Natural killer cell (primary cell): ENCODE measurements at regions of chr10 and their contacts with region 1.

Region 1: DNA sequence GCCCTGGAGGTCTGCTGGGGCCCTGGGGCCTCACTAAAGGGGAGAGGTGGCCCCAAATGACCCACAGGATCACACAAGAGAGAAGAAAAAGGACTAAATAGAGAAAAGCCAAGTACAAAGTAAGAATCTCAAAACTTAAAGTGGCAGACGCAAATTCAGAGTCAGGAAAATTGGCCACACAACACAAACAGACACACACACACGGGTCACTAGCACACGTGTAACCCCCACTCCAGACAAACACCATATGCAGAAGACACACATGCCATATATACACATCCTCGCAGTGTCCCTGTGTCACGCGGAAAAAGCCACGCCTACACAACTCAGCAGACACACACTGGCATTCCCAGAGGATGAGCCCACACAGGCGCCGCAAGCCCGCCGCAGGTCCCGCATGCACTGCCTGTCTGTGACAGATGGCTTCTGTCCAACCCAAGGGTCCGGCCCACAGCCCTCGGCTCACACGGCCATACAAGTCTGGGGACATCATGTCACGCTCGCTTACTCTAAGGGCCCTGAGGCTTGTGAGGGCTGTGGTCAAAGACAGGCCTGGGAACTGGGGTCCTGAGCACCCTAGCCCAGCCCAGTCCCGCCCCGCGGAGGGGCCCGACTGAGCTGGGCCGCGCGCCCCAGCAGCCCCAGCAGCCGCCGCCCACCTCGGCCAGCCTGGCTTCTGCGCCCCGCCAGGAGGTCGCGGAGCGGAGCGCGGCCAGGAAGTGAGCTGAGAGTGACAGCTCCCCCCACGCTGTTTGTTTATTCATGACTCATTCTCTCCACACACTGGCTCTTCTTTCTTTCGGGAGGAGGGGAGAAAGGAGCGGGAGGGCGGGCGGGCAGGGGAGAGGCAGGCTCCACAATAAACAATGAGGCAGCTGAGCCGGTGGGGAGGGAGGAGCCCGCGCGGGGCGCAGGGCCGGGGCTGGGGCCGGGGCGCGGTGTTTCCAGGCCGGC is 95.5 kb upstream of the ZMIZ1 start:
- DNase-seq: peak; percentile 73 to 83
- ATAC-seq: peak; percentile 69 to 82 (median 79)
- H3K4me3 ChIP-seq: peak overlapping the region; percentile 18
- H3K4me3 Mint-ChIP-seq: peak overlapping the region; percentile 78
- H3K27ac ChIP-seq: no peak overlapping the region
- H3K27ac Mint-ChIP-seq: peak overlapping the region; percentile 27 to 97
- H3K4me1 ChIP-seq: peaks cover 17% of the 10 kb centered on the region
- H3K4me1 Mint-ChIP-seq: peaks cover 16 to 24% of the 10 kb centered on the region in 2 donors
- H3K27me3 ChIP-seq: no peaks in the 10 kb centered on the region
- H3K27me3 Mint-ChIP-seq: peaks cover 4 to 8% of the 10 kb centered on the region in 2 donors
- CTCF ChIP-seq: no peak

Region 2: DNA sequence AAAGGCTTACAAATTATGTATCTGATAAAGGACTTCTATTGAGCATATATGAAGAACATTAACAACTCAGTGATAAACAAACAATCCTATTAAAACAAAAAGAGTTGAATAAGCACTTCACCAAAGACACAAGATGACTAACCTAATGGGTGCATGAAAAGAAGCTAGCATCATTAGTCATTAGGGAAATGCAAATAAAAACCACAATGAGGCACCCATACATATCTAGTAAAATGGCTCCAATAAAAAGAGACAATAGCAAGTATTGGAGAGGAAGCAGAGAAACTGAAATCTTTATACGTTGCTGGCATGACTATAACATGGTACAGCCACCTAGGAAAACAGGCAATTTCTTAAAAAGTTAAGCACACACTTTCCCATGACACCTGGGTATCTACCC is 18.0 kb after region 1 on chr10:
- intact Hi-C with region 1: no loop called
- DNase-seq: no peak
- ATAC-seq: no peak
- H3K4me3 ChIP-seq: no peak overlapping the region
- H3K4me3 Mint-ChIP-seq: no peak overlapping the region
- H3K27ac ChIP-seq: no peak overlapping the region
- H3K27ac Mint-ChIP-seq: no peak overlapping the region
- H3K4me1 ChIP-seq: no peaks in the 10 kb centered on the region
- H3K4me1 Mint-ChIP-seq: no peaks in the 10 kb centered on the region
- H3K27me3 ChIP-seq: no peaks in the 10 kb centered on the region
- H3K27me3 Mint-ChIP-seq: peaks cover 6% of the 10 kb centered on the region in 2 donors
- CTCF ChIP-seq: no peak

Region 3: GRCh38 chr10:79025199-79025832 is 52.1 kb after region 1 on chr10:
- intact Hi-C with region 1: loop called (anchors 1 kb)
- DNase-seq: peak; percentile 70 to 78
- ATAC-seq: peak; percentile 57 to 74 (median 68)
- H3K4me3 ChIP-seq: no peak overlapping the region
- H3K4me3 Mint-ChIP-seq: peak overlapping the region; percentile 18
- H3K27ac ChIP-seq: no peak overlapping the region
- H3K27ac Mint-ChIP-seq: peak overlapping the region; percentile 5 to 59
- H3K4me1 ChIP-seq: peaks cover 52% of the 10 kb centered on the region
- H3K4me1 Mint-ChIP-seq: peaks cover 39 to 42% of the 10 kb centered on the region in 2 donors
- H3K27me3 ChIP-seq: peaks cover 5% of the 10 kb centered on the region
- H3K27me3 Mint-ChIP-seq: peaks cover 26 to 38% of the 10 kb centered on the region in 2 donors
- CTCF ChIP-seq: no peak